Activated CD4-positive, alpha-beta T cell treated with anti-CD3 and anti-CD28 coated beads, Interleukin-2, amount 10 ng/mL, durations not matched to agents 24 days and 14 days (primary cell): ENCODE measurements at regions of chr1 and their contacts with region 1.

Region 1: DNA sequence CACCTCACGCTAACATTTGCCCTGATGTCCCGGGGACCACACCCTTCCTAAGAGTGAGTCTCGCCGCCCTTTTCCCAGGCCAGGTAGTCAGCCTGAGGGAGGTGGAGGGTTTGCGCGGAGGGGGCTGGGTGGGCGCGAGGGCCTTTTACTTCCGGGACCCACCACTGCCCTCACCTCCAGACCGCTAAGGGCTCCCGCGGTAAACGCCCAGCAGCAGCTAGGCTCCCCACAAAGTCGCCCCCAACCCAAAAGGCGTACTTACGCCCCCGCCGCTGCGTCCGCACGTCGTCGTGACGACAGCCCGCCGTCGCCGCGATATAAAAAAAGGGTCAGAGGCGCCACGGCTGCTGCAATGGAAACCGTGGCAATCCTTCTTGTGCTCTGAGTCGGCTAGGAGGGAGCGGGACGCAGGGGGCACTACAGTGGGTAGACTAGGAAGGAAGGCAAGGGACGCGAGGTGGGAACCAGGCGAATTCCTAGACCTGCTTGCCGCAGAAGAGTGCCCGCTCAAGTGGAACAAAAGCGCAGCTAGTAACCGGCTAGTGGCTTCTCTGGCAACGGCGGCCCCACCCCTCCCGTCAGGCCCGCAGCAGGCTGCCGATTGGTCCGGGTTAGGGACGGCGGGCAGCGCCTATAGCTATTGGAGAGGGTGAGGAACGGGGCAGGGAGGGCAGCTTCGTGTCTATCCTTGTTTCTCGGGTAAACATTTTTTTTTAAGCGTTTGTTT is at the start of gene ODF2L:
- DNase-seq: peak; percentile 97
- H3K4me3 Mint-ChIP-seq: peak within 1 kb of the TSS; percentile 94
- H3K27ac Mint-ChIP-seq: peak within 1 kb of the TSS; percentile 98
- H3K4me1 Mint-ChIP-seq: peaks cover 37% of the 10 kb centered on the region
- H3K27me3 Mint-ChIP-seq: peaks cover 13% of the 10 kb centered on the region
- total RNA-seq, gene ODF2L: 16.0 and 23.3 TPM in 2 replicates

Region 2: GRCh38 chr1:87335175-87335884 is 939.4 kb after region 1 on chr1:
- intact Hi-C with region 1: loop called (anchors 10 kb)
- DNase-seq: peak; percentile 91
- H3K4me3 Mint-ChIP-seq: peak overlapping the region; percentile 89
- H3K27ac Mint-ChIP-seq: peak overlapping the region; percentile 89
- H3K4me1 Mint-ChIP-seq: peaks cover 50% of the 10 kb centered on the region
- H3K27me3 Mint-ChIP-seq: no peaks in the 10 kb centered on the region